OCI-LY7 (cell line): ENCODE measurements at regions of chr3 and their contacts with region 1.

Region 1: GRCh38 chr3:132641837-132642538 is 17.6 kb downstream of the ACAD11 start:
- DNase-seq: peak; percentile 53
- H3K4me3 ChIP-seq: no peak overlapping the region
- H3K27ac ChIP-seq: no peak overlapping the region
- H3K4me1 ChIP-seq: no peaks in the 10 kb centered on the region
- CTCF ChIP-seq: peak; percentile 90

Region 2: GRCh38 chr3:132535575-132536441 is 106.2 kb before region 1 on chr3:
- CTCF ChIA-PET with region 1: interaction called, 4 read pairs
- POLR2A ChIA-PET with region 1: no interaction called
- intact Hi-C with region 1: loop called (anchors 1 kb)
- DNase-seq: peak; percentile 75
- H3K4me3 ChIP-seq: no peak overlapping the region
- H3K27ac ChIP-seq: no peak overlapping the region
- H3K4me1 ChIP-seq: no peaks in the 10 kb centered on the region
- CTCF ChIP-seq: peak; percentile 91